ENCODE measurements at regions of chr13 and their contacts with region 1.

Region 1: GRCh38 chr13:76023652-76024051 is 387.5 kb downstream of the LMO7 start:
- DNase-seq: peak in 1 of 2 experiments; percentile 24
- H3K4me3 ChIP-seq: no peak overlapping the region
- H3K4me3 Mint-ChIP-seq: peak overlapping the region; percentile 33
- H3K27ac Mint-ChIP-seq: peak overlapping the region; percentile 91
- H3K4me1 ChIP-seq: peaks cover 48% of the 10 kb centered on the region
- H3K4me1 Mint-ChIP-seq: peaks cover 47% of the 10 kb centered on the region
- H3K27me3 ChIP-seq: no peaks in the 10 kb centered on the region
- H3K27me3 Mint-ChIP-seq: no peaks in the 10 kb centered on the region
- CTCF ChIP-seq: no peak

Region 2: GRCh38 chr13:76009491-76009890 is 14.2 kb before region 1 on chr13:
- CTCF ChIA-PET with region 1: interaction called, 4 read pairs
- POLR2A ChIA-PET with region 1: interaction called, 15 read pairs
- intact Hi-C with region 1: loop called (anchors 1 kb)
- DNase-seq: peak in 1 of 2 experiments; percentile 48
- H3K4me3 ChIP-seq: no peak overlapping the region
- H3K4me3 Mint-ChIP-seq: peak overlapping the region; percentile 61
- H3K27ac Mint-ChIP-seq: peak overlapping the region; percentile 95
- H3K4me1 ChIP-seq: peaks cover 95% of the 10 kb centered on the region
- H3K4me1 Mint-ChIP-seq: peaks cover 53% of the 10 kb centered on the region
- H3K27me3 ChIP-seq: no peaks in the 10 kb centered on the region
- H3K27me3 Mint-ChIP-seq: no peaks in the 10 kb centered on the region
- CTCF ChIP-seq: no peak

Region 3: DNA sequence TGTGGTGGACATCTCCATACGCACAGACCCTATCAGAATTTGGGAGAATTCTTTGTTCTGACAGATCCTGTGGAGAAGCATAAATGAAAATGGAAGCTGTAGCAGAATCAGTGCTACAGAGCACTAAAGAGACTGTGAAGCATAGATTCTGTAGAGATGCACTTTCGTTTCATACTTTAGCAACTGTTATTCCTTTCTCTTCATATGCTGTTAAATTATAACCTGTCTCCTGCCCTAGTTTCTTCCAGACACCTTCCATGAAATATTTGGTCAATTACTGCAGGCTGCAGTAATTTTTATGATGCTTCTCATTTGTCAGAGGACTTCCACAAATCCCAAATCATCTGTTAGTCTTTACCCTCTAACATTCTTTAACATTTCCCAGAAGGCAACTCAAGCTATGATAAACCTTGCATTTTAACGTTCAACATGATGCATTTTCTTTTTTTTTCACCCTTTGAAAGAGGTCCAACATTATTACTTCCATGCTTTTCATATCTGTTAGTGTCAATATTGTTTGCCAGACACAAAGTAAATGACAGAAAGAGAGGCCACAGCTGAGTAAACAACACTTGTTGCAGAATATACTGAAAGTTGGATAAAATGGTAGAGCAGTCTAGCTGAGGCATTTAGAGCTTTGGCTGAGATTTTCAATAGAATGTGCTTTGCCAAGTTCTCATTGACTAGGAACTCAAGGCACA is 25.2 kb after region 1 on chr13:
- CTCF ChIA-PET with region 1: interaction called, 3 read pairs
- POLR2A ChIA-PET with region 1: no interaction called
- intact Hi-C with region 1: loop called (anchors 2 kb)
- DNase-seq: peak in 1 of 2 experiments; percentile 29
- H3K4me3 ChIP-seq: no peak overlapping the region
- H3K4me3 Mint-ChIP-seq: peak overlapping the region; percentile 28
- H3K27ac Mint-ChIP-seq: peak overlapping the region; percentile 58
- H3K4me1 ChIP-seq: peaks cover 31% of the 10 kb centered on the region
- H3K4me1 Mint-ChIP-seq: peaks cover 19% of the 10 kb centered on the region
- H3K27me3 ChIP-seq: no peaks in the 10 kb centered on the region
- H3K27me3 Mint-ChIP-seq: no peaks in the 10 kb centered on the region
- CTCF ChIP-seq: no peak

Region 4: GRCh38 chr13:76106763-76107162 is 83.1 kb after region 1 on chr13:
- CTCF ChIA-PET with region 1: no interaction called
- POLR2A ChIA-PET with region 1: no interaction called
- intact Hi-C with region 1: no loop called
- DNase-seq: no peak
- H3K4me3 ChIP-seq: no peak overlapping the region
- H3K4me3 Mint-ChIP-seq: no peak overlapping the region
- H3K27ac Mint-ChIP-seq: no peak overlapping the region
- H3K4me1 ChIP-seq: peaks cover 15% of the 10 kb centered on the region
- H3K4me1 Mint-ChIP-seq: no peaks in the 10 kb centered on the region
- H3K27me3 ChIP-seq: no peaks in the 10 kb centered on the region
- H3K27me3 Mint-ChIP-seq: no peaks in the 10 kb centered on the region
- CTCF ChIP-seq: no peak

Measured in Caco-2 (cell line).